ENCODE measurements at regions of chr5 and their contacts with region 1.

Region 1: DNA sequence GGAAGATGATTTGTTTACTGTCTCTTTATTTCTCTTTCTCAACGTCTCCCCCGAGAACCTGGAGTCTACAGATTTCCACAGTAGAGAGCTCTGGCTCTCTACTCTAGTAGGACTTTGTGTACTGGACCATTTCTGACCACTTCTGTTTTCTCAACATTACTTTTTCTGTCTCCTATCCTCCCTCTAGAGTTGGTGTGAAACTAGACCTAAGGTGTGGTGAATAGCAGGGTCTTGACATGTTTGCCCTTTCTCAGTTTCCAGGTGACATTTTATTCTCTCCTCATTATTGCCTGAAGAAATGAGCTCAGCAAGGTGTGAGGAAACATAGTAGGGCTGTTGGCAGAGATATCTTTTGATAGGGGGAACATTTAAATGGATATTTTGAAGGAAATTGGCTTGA is 62.1 kb upstream of the IL6ST start:
- DNase-seq: no peak
- H3K4me3 ChIP-seq: no peak overlapping the region
- H3K4me3 Mint-ChIP-seq: peak overlapping the region in 7 of 8 donors; percentile 39 to 76 (median 63)
- H3K27ac ChIP-seq: no peak overlapping the region
- H3K27ac Mint-ChIP-seq: peak overlapping the region; percentile 39 to 92 (median 80)
- H3K4me1 ChIP-seq: peaks cover 80% of the 10 kb centered on the region
- H3K4me1 Mint-ChIP-seq: peaks cover 46 to 82% (median 65%) of the 10 kb centered on the region in 4 donors
- H3K27me3 ChIP-seq: no peaks in the 10 kb centered on the region
- H3K27me3 Mint-ChIP-seq: no peaks in the 10 kb centered on the region

Region 2: DNA sequence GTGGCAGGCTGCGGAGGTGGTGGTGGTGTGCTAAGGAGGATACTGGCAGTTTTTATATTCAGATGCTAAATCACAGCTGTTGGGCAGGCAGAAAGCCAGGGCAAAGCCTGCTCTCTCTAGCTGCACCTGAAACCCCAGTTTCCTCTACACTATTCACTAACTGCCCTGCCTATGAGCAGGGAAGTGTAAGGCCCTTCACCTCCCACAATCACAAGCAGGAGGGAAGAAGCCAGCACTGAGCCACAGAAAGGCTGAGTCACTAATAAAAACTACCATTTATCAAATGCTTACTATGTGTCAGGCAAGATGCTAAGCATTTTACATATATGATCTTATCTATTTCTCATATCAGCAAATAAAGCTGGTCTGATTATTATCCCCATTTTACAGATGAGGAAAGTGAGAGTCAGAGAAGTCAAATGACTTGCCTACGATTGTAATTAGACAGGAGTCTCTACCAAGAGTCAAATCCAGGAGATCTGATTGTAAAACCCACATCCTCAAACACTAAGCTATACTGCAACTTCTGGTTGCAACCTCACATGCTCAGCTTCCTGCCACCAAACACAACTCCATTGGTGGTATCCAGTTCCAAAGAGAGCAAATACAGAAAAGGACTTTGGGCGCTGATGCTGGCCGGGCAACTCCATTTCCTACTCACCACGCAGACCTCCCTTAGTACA is 44.5 kb before region 1 on chr5:
- CTCF ChIA-PET with region 1: no interaction called
- POLR2A ChIA-PET with region 1: interaction called, 10 read pairs
- intact Hi-C with region 1: no loop called
- DNase-seq: peak; percentile 59 to 77 (median 63)
- H3K4me3 ChIP-seq: peak overlapping the region in 1 of 2 donors; percentile 20
- H3K4me3 Mint-ChIP-seq: peak overlapping the region; percentile 8 to 82 (median 57)
- H3K27ac ChIP-seq: peak overlapping the region; percentile 12
- H3K27ac Mint-ChIP-seq: peak overlapping the region; percentile 73 to 85 (median 83)
- H3K4me1 ChIP-seq: peaks cover 30% of the 10 kb centered on the region
- H3K4me1 Mint-ChIP-seq: peaks cover 25 to 50% (median 31%) of the 10 kb centered on the region in 4 donors
- H3K27me3 ChIP-seq: no peaks in the 10 kb centered on the region
- H3K27me3 Mint-ChIP-seq: no peaks in the 10 kb centered on the region

Region 3: DNA sequence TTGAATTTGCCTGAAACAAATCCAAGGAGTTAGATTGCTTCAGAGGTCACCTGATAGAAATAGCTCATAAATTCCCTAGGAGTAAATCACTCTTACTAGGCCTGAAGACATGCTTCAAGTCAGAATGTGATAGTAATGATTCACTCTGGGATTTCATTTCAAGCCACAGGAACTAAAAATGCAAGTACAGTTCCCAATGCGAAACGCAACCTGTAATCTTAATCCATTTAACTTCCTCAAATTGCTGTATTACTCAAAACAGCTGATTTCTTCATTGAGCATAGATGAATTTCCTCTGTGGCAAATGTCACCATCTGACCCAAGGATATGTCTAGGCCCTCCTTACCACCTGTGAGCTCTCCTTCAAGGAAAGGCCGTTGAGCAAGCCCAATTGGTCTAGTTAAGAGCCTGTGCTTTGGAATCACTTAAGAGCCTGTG is 30.0 kb before region 1 on chr5:
- CTCF ChIA-PET with region 1: no interaction called
- POLR2A ChIA-PET with region 1: no interaction called
- intact Hi-C with region 1: no loop called
- DNase-seq: no peak
- H3K4me3 ChIP-seq: no peak overlapping the region
- H3K4me3 Mint-ChIP-seq: no peak overlapping the region
- H3K27ac ChIP-seq: no peak overlapping the region
- H3K27ac Mint-ChIP-seq: no peak overlapping the region
- H3K4me1 ChIP-seq: no peaks in the 10 kb centered on the region
- H3K4me1 Mint-ChIP-seq: peaks cover 0 to 13% (median 2%) of the 10 kb centered on the region in 4 donors
- H3K27me3 ChIP-seq: no peaks in the 10 kb centered on the region
- H3K27me3 Mint-ChIP-seq: no peaks in the 10 kb centered on the region

Region 4: DNA sequence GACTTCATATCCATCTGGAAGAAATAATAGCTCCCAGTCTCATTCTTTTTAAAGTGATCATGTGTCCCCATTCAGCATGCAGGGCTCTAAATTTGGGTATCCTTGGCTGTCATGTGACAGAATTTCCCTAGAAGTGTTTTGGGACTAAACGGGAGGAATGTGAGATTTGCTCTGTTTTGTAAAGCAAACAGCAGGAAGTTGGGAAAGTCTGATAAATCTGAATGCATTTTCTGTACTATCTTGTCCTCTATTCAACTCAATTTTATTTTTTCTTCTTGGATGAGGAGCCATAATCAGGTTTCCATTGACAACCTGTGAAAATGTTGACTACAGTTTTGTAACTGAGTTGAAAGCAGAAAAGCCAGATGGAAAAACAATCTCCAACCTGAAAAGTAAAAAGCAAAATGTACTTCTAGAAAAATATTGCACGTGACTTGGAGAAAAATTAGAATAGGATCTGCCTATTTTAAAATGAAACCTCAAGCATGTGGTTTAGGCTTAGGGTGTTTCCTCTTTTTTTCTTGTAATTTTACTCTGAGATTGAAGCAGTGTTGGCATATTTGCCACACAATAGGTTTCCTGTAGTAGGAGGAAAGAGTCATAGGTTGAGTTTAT is 14.1 kb after region 1 on chr5:
- CTCF ChIA-PET with region 1: interaction called, 3 read pairs
- POLR2A ChIA-PET with region 1: interaction called, 10 read pairs
- intact Hi-C with region 1: no loop called
- DNase-seq: peak in 4 of 5 donors; percentile 35 to 54 (median 43)
- H3K4me3 ChIP-seq: no peak overlapping the region
- H3K4me3 Mint-ChIP-seq: peak overlapping the region; percentile 5 to 84 (median 73)
- H3K27ac ChIP-seq: no peak overlapping the region
- H3K27ac Mint-ChIP-seq: peak overlapping the region; percentile 77 to 95 (median 89)
- H3K4me1 ChIP-seq: peaks cover 59% of the 10 kb centered on the region
- H3K4me1 Mint-ChIP-seq: peaks cover 44 to 80% (median 57%) of the 10 kb centered on the region in 4 donors
- H3K27me3 ChIP-seq: no peaks in the 10 kb centered on the region
- H3K27me3 Mint-ChIP-seq: no peaks in the 10 kb centered on the region

Region 5: GRCh38 chr5:56095579-56096102 is 38.8 kb after region 1 on chr5:
- CTCF ChIA-PET with region 1: interaction called, 3 read pairs
- POLR2A ChIA-PET with region 1: interaction called, 5 read pairs
- intact Hi-C with region 1: loop called (anchors 2 kb)
- DNase-seq: no peak
- H3K4me3 ChIP-seq: no peak overlapping the region
- H3K4me3 Mint-ChIP-seq: peak overlapping the region in 6 of 8 donors; percentile 1 to 84 (median 12)
- H3K27ac ChIP-seq: no peak overlapping the region
- H3K27ac Mint-ChIP-seq: peak overlapping the region; percentile 23 to 91 (median 73)
- H3K4me1 ChIP-seq: peaks cover 87% of the 10 kb centered on the region
- H3K4me1 Mint-ChIP-seq: peaks cover 55 to 80% (median 66%) of the 10 kb centered on the region in 4 donors
- H3K27me3 ChIP-seq: no peaks in the 10 kb centered on the region
- H3K27me3 Mint-ChIP-seq: no peaks in the 10 kb centered on the region

Region 6: GRCh38 chr5:56155992-56156584 is 99.2 kb after region 1 on chr5:
- CTCF ChIA-PET with region 1: no interaction called
- POLR2A ChIA-PET with region 1: interaction called, 4 read pairs
- intact Hi-C with region 1: loop called (anchors 5 kb)
- DNase-seq: no peak
- H3K4me3 ChIP-seq: no peak overlapping the region
- H3K4me3 Mint-ChIP-seq: peak overlapping the region; percentile 34 to 89 (median 60)
- H3K27ac ChIP-seq: peak overlapping the region; percentile 0
- H3K27ac Mint-ChIP-seq: peak overlapping the region; percentile 90 to 95 (median 91)
- H3K4me1 ChIP-seq: peaks cover 70% of the 10 kb centered on the region
- H3K4me1 Mint-ChIP-seq: peaks cover 51 to 88% (median 72%) of the 10 kb centered on the region in 4 donors
- H3K27me3 ChIP-seq: no peaks in the 10 kb centered on the region
- H3K27me3 Mint-ChIP-seq: no peaks in the 10 kb centered on the region

Region 7: DNA sequence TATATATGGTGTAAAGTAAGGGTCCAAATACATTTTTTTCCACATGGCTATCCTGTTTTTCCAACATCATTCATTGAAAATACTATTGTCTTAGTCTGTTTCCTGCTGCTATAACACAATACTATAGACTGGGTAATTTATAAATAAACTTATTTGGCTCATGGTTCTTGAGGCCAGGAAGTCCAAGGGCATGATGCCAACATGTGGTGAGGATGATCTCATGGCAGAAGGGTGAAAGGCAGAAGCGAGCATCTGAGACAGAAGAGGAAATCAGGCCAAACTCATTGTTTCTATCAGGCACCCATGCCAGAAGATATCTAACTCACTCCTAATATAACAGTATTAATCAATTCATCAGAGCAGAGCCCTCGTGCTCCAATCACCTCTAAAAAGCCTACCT is 133.6 kb after region 1 on chr5:
- CTCF ChIA-PET with region 1: no interaction called
- POLR2A ChIA-PET with region 1: no interaction called
- intact Hi-C with region 1: loop called (anchors 5 kb)
- DNase-seq: peak; percentile 44 to 64 (median 61)
- H3K4me3 ChIP-seq: no peak overlapping the region
- H3K4me3 Mint-ChIP-seq: peak overlapping the region in 1 of 8 donors; percentile 1
- H3K27ac ChIP-seq: no peak overlapping the region
- H3K27ac Mint-ChIP-seq: peak overlapping the region in 4 of 7 donors; percentile 9 to 44 (median 38)
- H3K4me1 ChIP-seq: peaks cover 16% of the 10 kb centered on the region
- H3K4me1 Mint-ChIP-seq: peaks cover 8 to 9% (median 9%) of the 10 kb centered on the region in 4 donors
- H3K27me3 ChIP-seq: no peaks in the 10 kb centered on the region
- H3K27me3 Mint-ChIP-seq: no peaks in the 10 kb centered on the region